Activated CD4-positive, alpha-beta memory T cell treated with anti-CD3 and anti-CD28 coated beads for 36 hours (primary cell): ENCODE measurements at regions of chr12 and their contacts with region 1.

Region 1: DNA sequence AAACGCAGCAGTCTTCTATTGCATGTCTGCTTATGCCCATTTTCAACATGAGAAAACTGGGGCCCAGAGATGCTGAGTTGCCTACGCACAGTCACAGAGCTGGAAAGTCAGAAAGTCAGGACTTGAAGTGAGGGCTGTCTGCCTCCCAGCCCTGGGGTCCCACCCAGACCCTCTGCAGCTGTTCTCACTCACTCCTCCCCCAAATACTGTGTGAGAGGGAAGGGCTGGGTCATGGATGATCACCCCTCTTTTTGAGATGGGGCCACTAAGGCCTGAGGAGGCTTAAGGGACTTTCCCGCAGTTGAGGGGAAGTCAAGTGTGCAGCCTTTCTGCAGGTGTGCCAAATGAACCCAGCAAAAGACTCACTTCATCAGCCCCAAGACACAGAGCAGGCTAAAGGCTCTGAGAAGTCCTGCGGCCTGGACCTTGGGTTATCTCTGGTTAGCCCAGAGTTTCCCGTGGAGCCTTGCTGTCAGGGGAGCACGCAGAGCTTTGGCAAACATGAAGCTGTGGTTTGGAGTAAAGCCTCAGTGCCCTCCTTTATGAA is 18.7 kb downstream of the DTX1 start:
- DNase-seq: peak; percentile 33
- H3K4me3 Mint-ChIP-seq: no peak overlapping the region
- H3K27ac Mint-ChIP-seq: peak overlapping the region; percentile 54
- H3K4me1 Mint-ChIP-seq: peaks cover 44% of the 10 kb centered on the region
- H3K27me3 Mint-ChIP-seq: no peaks in the 10 kb centered on the region

Region 2: GRCh38 chr12:112656140-112656539 is 419.1 kb before region 1 on chr12:
- CTCF ChIA-PET with region 1: no interaction called
- POLR2A ChIA-PET with region 1: no interaction called
- intact Hi-C with region 1: no loop called
- DNase-seq: no peak
- H3K4me3 Mint-ChIP-seq: no peak overlapping the region
- H3K27ac Mint-ChIP-seq: no peak overlapping the region
- H3K4me1 Mint-ChIP-seq: no peaks in the 10 kb centered on the region
- H3K27me3 Mint-ChIP-seq: no peaks in the 10 kb centered on the region

Region 3: GRCh38 chr12:113056631-113057488 is 18.4 kb before region 1 on chr12 and contains the start of gene DTX1:
- CTCF ChIA-PET with region 1: no interaction called
- POLR2A ChIA-PET with region 1: interaction called, 3 read pairs
- intact Hi-C with region 1: loop called (anchors 2 kb)
- DNase-seq: peak; percentile 54
- H3K4me3 Mint-ChIP-seq: peak within 1 kb of the TSS; percentile 74
- H3K27ac Mint-ChIP-seq: no peak within 1 kb of the TSS
- H3K4me1 Mint-ChIP-seq: peaks cover 22% of the 10 kb centered on the region
- H3K27me3 Mint-ChIP-seq: no peaks in the 10 kb centered on the region
- total RNA-seq, gene DTX1: 11.0 to 12.4 TPM

Region 4: DNA sequence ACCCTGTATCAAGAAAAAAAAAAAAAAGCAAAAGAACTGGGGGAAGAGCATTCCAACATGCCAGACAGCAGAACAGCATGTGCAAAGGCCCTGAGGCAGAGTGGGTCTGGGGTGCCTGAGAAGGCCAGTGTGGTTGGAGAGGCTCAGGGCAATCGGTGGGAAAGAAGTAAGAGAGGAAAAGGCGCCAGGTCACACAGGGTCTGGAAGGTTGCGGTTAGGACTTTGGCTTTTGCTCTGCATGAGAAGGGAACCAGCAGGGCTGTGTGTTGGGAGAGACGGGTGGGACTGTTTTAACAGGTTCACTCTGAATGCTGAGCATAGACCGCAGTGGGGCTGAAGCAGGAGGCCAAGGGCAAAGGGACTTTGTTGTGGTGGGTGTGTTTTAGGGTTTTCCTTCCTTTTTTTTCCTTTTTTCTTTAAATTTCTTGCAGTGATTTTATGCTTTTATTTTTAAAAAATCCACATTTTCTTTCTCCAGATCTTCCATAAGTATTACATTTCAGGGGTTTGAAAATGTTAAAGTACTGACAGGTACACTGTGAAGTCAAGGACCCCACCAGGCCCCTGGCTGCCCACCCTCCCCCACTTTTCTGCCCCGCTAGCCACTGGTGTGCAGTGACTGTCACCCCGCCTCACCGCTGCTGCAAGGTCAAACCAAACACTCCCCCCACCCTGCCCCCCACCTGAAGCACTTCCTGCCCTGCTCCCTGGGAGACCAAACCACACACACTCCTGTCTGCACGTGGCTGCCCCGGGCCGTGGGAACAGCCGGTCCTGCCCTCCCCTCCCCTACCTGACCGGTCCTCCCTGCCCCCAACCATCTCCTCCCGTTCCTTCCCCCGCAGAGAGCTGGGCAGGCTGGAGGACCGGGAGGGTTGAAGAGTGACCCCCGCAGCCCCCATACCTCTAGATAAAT is 11.3 kb after region 1 on chr12:
- CTCF ChIA-PET with region 1: interaction called, 3 read pairs
- POLR2A ChIA-PET with region 1: interaction called, 3 read pairs
- intact Hi-C with region 1: loop called (anchors 2 kb)
- DNase-seq: peak; percentile 57
- H3K4me3 Mint-ChIP-seq: peak overlapping the region; percentile 21
- H3K27ac Mint-ChIP-seq: peak overlapping the region; percentile 69
- H3K4me1 Mint-ChIP-seq: peaks cover 55% of the 10 kb centered on the region
- H3K27me3 Mint-ChIP-seq: no peaks in the 10 kb centered on the region